ENCODE measurements at regions of chr4 and their contacts with region 1.

Region 1: GRCh38 chr4:124936427-124936826 is 223.9 kb upstream of the ANKRD50 start:
- DNase-seq: peak; percentile 85 to 90
- ATAC-seq: peak; percentile 99
- H3K4me3 ChIP-seq: no peak overlapping the region
- H3K27ac ChIP-seq: peak overlapping the region; percentile 23 to 73 (median 61)
- H3K4me1 ChIP-seq: peaks cover 37 to 39% of the 10 kb centered on the region in 2 donors
- H3K27me3 ChIP-seq: no peaks in the 10 kb centered on the region
- CTCF ChIP-seq: no peak
- POLR2A ChIP-seq: no peak

Region 2: GRCh38 chr4:124883632-124884031 is 52.8 kb before region 1 on chr4:
- in situ Hi-C with region 1: no loop called
- intact Hi-C with region 1: no loop called
- DNase-seq: no peak
- ATAC-seq: no peak
- H3K4me3 ChIP-seq: no peak overlapping the region
- H3K27ac ChIP-seq: no peak overlapping the region
- H3K4me1 ChIP-seq: no peaks in the 10 kb centered on the region
- H3K27me3 ChIP-seq: no peaks in the 10 kb centered on the region
- CTCF ChIP-seq: no peak
- POLR2A ChIP-seq: no peak

Region 3: DNA sequence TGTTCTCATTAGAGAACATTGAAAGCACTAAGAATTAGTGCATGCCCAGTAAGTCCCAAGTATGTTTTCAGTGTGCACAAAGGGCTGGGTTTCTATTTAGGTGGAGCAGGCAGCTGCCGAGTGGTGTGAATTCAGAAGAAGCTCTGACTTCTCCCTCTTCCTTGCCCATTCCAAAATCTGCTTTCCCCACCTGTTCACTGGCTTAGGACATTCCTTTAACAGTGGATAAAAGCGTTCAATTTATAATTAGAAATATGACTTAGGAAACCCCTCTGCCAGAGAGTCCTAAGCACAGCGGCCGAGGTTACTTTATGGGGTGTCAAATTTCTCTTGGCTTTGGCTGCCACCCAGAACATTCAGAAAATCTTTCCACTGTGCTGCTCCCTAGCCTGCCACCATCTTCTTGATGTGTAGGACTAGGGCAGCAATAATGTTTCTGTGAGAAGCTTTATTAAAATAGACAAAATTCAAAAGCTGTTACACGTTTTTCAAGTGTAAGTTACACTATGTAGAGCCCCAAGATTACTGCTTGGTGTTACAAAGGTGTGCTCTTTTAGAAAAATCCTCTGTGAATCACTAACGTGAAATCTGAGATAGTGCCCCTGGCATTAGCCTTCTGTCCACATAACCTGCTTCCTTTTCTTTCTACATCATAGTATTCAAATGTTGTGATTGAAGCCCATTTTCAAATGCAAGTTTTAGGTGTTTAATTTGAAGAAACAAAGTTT is 32.3 kb before region 1 on chr4:
- in situ Hi-C with region 1: no loop called
- intact Hi-C with region 1: loop called (anchors 1 kb)
- DNase-seq: peak; percentile 47 to 78
- ATAC-seq: peak; percentile 97 to 98
- H3K4me3 ChIP-seq: peak overlapping the region in 3 of 4 donors; percentile 8 to 19 (median 16)
- H3K27ac ChIP-seq: peak overlapping the region; percentile 33 to 76 (median 52)
- H3K4me1 ChIP-seq: peaks cover 30 to 32% of the 10 kb centered on the region in 2 donors
- H3K27me3 ChIP-seq: no peaks in the 10 kb centered on the region
- CTCF ChIP-seq: no peak
- POLR2A ChIP-seq: no peak

Measured in gastrocnemius medialis (tissue), 4 donors.